ENCODE measurements at regions of chr7 and their contacts with region 1.

Region 1: DNA sequence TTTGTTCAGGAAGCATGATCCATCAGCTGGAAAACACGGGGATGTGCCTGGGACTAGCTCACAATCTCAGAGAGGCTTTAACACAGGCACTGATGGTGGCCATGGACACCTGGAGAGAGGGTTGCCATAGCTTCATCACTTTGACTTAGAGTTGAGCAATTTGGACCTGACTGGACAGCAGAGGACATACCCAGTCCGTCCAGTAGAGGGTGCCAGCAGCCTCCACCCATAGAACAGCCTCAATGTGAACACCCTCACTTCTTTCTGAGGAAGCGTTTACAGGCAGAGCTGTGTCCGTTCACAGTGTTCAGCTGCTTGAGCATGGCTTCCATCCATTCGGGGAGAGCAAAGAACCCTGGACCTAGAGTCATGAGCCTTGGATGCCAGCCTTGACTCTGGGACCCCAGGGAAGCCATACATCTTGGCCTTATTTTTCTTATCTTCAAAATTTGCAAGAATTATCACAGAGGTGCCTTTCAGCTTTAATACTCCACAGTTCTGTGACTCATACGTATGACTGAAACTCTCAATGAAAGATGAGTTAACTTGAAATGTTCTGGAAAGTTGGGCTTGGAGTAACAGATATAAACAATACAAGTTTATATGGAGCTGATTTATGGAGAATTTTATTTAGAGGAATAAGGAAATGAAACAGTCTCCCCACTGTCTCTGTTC is 302.9 kb upstream of the PODXL start:
- DNase-seq: peak; percentile 77
- H3K4me3 ChIP-seq: no peak overlapping the region
- H3K27ac ChIP-seq: no peak overlapping the region
- H3K4me1 ChIP-seq: no peaks in the 10 kb centered on the region
- H3K27me3 ChIP-seq: no peaks in the 10 kb centered on the region
- CTCF ChIP-seq: peak; percentile 91

Region 2: GRCh38 chr7:131488361-131488760 is 370.9 kb before region 1 on chr7:
- CTCF ChIA-PET with region 1: no interaction called
- POLR2A ChIA-PET with region 1: no interaction called
- intact Hi-C with region 1: no loop called
- DNase-seq: peak; percentile 18
- H3K4me3 ChIP-seq: no peak overlapping the region
- H3K27ac ChIP-seq: no peak overlapping the region
- H3K4me1 ChIP-seq: peaks cover 7% of the 10 kb centered on the region
- H3K27me3 ChIP-seq: no peaks in the 10 kb centered on the region
- CTCF ChIP-seq: peak; percentile 36; the same call in 1 of the 2 replicates

Region 3: DNA sequence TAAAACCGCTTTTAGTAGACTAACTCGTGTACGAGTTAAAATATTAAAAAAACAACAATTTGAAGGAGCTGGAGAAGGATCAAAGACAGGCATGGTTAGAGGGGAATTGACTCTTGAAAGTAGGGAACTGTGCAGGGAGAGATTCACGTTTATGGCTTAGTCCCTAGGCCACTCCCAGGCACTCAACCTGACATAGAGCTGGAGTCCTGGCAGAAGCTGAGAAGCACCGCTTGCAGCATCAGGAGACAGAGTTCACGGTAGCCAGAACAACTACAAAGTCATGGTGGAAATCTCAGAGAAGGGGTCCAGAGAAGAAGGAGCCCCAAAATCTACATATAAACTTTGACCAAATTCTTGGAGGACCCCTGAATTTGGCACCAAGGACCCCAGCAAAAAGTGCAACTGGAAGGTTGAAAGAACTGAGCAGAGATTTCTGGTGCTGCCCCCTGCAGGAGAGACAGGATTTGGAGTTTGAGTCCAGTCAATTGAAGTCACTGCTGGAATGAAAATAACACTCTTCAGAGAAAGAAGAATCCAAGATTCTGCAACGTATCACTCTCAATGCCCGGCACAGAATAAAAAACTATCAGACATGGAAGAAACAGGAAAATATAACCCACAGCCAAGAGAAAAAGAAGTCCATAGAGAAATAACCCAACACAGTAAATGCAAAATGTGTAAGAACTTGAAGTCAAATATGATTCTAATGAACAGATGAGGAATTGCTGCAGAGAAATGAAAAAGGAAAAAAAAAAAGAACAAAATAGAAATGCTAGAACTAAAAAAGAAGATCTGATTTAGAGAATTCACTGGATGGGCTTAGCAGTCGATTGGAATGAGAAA is 190.4 kb after region 1 on chr7:
- CTCF ChIA-PET with region 1: interaction called, 3 read pairs
- POLR2A ChIA-PET with region 1: no interaction called
- intact Hi-C with region 1: loop called (anchors 5 kb)
- DNase-seq: peak; percentile 54
- H3K4me3 ChIP-seq: no peak overlapping the region
- H3K27ac ChIP-seq: no peak overlapping the region
- H3K4me1 ChIP-seq: no peaks in the 10 kb centered on the region
- H3K27me3 ChIP-seq: peaks cover 12% of the 10 kb centered on the region
- CTCF ChIP-seq: peak; percentile 87

Measured in A673 (cell line).